ENCODE measurements at regions of chr7 and their contacts with region 1.

Region 1: GRCh38 chr7:116271963-116272839 is 61.9 kb downstream of the TES start:
- DNase-seq: peak; percentile 27 to 58
- ATAC-seq: peak; percentile 99 to 100 (median 100)
- H3K4me3 ChIP-seq: peak overlapping the region; percentile 34
- H3K27ac ChIP-seq: peak overlapping the region; percentile 81
- H3K4me1 ChIP-seq: peaks cover 38% of the 10 kb centered on the region
- H3K27me3 ChIP-seq: no peaks in the 10 kb centered on the region
- CTCF ChIP-seq: no peak

Region 2: GRCh38 chr7:116316833-116317612 is 44.8 kb after region 1 on chr7:
- intact Hi-C with region 1: loop called (anchors 5 kb)
- DNase-seq: peak in 1 of 2 donors; percentile 16
- ATAC-seq: peak; percentile 81 to 96 (median 94)
- H3K4me3 ChIP-seq: peak overlapping the region; percentile 5
- H3K27ac ChIP-seq: peak overlapping the region; percentile 61
- H3K4me1 ChIP-seq: peaks cover 10% of the 10 kb centered on the region
- H3K27me3 ChIP-seq: no peaks in the 10 kb centered on the region
- CTCF ChIP-seq: no peak

Region 3: GRCh38 chr7:116327752-116328151 is 55.6 kb after region 1 on chr7:
- intact Hi-C with region 1: no loop called
- DNase-seq: no peak
- ATAC-seq: no peak
- H3K4me3 ChIP-seq: no peak overlapping the region
- H3K27ac ChIP-seq: no peak overlapping the region
- H3K4me1 ChIP-seq: no peaks in the 10 kb centered on the region
- H3K27me3 ChIP-seq: no peaks in the 10 kb centered on the region
- CTCF ChIP-seq: no peak

Region 4: GRCh38 chr7:116403265-116403664 is 131.1 kb after region 1 on chr7:
- intact Hi-C with region 1: no loop called
- DNase-seq: no peak
- ATAC-seq: peak; percentile 62 to 83 (median 74)
- H3K4me3 ChIP-seq: no peak overlapping the region
- H3K27ac ChIP-seq: no peak overlapping the region
- H3K4me1 ChIP-seq: peaks cover 9% of the 10 kb centered on the region
- H3K27me3 ChIP-seq: no peaks in the 10 kb centered on the region
- CTCF ChIP-seq: no peak